Activated T-helper 1 cell treated with anti-CD3 and anti-CD28 coated beads, Interleukin-12 subunit alpha, Interleukin-12 subunit beta, Interleukin-2, Interleukin-4 antibody, amounts not matched to agents 30 ng/mL and 10 ng/mL and 1 ng/mL, durations not matched to agents 14 hours and 24 hours and 36 hours (primary cell): ENCODE measurements at regions of chr2 and their contacts with region 1.

Region 1: GRCh38 chr2:97663965-97664635 is at the start of gene ACTR1B:
- DNase-seq: peak; percentile 98
- H3K4me3 Mint-ChIP-seq: peak within 1 kb of the TSS; percentile 94
- H3K27ac Mint-ChIP-seq: peak within 1 kb of the TSS; percentile 97
- H3K4me1 Mint-ChIP-seq: peaks cover 39% of the 10 kb centered on the region
- H3K27me3 Mint-ChIP-seq: no peaks in the 10 kb centered on the region
- total RNA-seq, gene ACTR1B: 101 and 102 TPM in 2 replicates

Region 2: DNA sequence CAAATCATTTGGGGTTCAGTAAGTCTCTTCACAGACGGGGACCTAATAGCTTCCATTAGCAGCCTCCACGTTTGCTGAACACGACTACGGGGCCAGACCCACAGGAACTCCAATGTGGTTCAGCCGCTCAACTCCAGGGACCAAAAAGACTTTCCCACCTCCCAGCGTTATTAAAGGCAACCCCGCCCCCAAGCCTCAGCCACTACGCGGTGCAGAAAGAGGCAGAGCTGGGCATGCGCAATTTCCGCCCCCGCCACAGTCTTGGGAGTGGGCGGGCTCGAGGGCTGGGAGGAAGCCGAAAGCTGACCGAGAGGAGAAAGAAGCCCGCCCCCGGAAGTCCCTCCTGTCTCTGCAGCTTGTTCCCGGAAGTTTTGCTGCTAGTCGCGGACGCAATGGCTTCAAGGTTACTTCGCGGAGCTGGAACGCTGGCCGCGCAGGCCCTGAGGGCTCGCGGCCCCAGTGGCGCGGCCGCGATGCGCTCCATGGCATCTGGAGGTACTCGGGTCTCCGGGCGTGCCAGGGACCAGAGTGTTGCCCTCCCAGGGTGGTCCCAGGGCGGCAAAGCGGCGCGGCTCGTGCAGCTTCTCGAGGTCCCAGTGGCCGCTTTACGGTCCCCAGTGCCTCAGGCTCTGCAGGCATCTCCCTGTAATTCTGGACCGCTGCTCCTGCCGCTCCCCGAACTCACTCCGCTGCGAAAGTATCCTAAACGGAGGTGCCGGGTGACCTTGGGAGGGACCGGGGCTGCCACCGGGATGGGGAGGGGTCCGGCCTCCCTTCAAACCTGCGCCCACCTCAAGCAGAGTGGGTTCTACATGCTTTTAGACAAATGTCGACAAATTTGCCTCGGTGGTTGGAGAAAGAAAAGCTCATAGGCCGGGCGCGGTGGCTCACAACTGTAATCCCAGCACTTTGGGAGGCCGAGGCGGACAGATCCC is 18.1 kb before region 1 on chr2 and contains the start of gene COX5B:
- intact Hi-C with region 1: loop called (anchors 1 kb)
- DNase-seq: peak; percentile 99
- H3K4me3 Mint-ChIP-seq: peak within 1 kb of the TSS; percentile 86
- H3K27ac Mint-ChIP-seq: peak within 1 kb of the TSS; percentile 97
- H3K4me1 Mint-ChIP-seq: peaks cover 29% of the 10 kb centered on the region
- H3K27me3 Mint-ChIP-seq: peaks cover 3% of the 10 kb centered on the region
- total RNA-seq, gene COX5B: 228 and 241 TPM in 2 replicates

Region 3: GRCh38 chr2:97688062-97688827 is 24.1 kb after region 1 on chr2:
- intact Hi-C with region 1: loop called (anchors 1 kb)
- DNase-seq: no peak
- H3K4me3 Mint-ChIP-seq: no peak overlapping the region
- H3K27ac Mint-ChIP-seq: peak overlapping the region; percentile 57
- H3K4me1 Mint-ChIP-seq: peaks cover 13% of the 10 kb centered on the region
- H3K27me3 Mint-ChIP-seq: no peaks in the 10 kb centered on the region

Region 4: DNA sequence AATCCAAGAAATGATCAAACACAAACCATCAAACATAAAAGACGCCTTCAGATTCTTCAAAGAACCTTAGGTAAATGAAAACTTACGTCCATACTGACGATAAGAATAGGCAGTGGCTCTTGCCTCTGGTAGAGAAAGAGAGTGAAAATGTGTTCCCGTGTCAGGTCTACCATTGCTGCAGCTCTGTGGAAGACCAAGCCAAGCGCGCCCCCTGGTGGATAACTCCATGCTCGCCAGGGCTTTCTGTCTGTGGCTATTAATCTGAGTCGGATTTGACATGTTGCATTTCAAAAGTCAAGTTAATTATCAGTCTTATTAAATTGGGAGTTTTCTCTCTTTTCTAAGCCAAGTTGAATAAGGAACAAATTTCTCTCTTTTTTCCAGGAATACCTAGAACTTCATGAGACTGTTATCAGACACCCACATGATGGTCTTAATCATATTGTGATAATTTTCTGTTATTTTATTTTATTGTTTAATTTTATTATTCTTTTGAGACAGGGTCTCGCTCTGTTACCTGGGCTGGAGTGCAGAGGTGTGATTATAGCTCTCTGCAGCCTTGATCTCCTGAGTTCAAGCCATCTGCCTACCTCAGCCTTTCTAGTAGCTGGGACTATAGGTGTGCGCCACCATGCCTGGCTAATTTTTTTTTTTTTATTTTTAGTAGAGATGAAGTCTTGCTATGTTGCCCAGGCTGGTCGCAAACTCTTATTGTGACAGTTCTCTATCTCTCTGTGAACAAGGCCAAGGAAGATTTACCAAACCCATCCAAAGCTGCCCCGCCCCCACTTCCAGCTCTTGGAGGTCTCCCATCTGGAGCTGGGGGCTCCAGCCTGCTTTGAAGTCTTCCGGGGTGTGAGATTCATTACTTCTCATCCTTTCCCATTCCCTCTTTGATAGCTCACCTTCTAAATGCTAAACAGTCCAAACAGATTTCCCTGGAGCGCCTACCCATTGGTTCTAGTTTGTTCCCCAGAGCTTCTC is 33.4 kb after region 1 on chr2:
- intact Hi-C with region 1: loop called (anchors 1 kb)
- DNase-seq: peak; percentile 82
- H3K4me3 Mint-ChIP-seq: no peak overlapping the region
- H3K27ac Mint-ChIP-seq: no peak overlapping the region
- H3K4me1 Mint-ChIP-seq: peaks cover 19% of the 10 kb centered on the region
- H3K27me3 Mint-ChIP-seq: peaks cover 8% of the 10 kb centered on the region

Region 5: DNA sequence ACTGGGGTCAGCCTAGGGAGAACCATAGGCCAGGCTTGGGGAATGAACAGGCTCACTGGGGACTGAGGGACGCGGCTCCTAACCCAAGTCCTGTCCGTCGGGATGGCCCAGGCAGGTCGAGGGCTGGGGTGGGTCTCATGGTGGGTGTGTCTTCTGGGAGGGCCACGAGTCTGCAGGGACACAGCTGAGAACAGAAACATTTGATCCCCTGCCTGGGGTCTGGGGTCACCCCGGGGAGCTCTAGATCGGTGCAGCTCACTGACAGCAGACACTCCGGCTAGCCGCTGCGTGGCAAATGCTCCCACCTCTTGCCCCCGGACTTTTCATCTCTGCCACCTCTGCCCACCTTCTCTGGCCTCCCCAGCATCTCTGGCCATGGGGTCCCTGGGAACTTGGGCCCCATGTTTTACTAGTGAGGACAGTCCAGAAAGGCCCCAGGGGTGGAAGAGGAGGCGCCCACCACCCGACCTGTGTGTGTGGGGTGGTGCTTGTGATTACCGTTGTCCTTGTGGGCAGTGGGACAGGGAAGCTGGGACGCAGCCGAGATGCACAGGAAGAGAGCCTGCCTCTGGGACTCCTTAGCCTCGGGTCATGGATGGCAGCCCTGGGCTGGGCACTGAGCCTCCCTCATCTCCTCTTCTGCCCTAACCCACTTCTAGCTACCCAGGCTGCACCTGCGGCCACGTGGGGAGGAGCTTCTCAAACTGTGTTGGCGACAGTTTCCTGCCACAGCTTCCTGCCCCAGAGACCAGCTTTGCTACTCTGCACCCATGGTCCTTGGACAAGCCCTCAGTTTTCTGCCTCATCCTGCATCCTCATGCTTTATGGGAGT is 54.2 kb after region 1 on chr2:
- intact Hi-C with region 1: loop called (anchors 1 kb)
- DNase-seq: peak; percentile 71
- H3K4me3 Mint-ChIP-seq: peak overlapping the region; percentile 94
- H3K27ac Mint-ChIP-seq: peak overlapping the region; percentile 93
- H3K4me1 Mint-ChIP-seq: peaks cover 69% of the 10 kb centered on the region
- H3K27me3 Mint-ChIP-seq: no peaks in the 10 kb centered on the region

Region 6: GRCh38 chr2:97740590-97741182 is 76.6 kb after region 1 on chr2:
- intact Hi-C with region 1: loop called (anchors 1 kb)
- DNase-seq: no peak
- H3K4me3 Mint-ChIP-seq: no peak overlapping the region
- H3K27ac Mint-ChIP-seq: peak overlapping the region; percentile 18
- H3K4me1 Mint-ChIP-seq: peaks cover 56% of the 10 kb centered on the region
- H3K27me3 Mint-ChIP-seq: no peaks in the 10 kb centered on the region

Region 7: DNA sequence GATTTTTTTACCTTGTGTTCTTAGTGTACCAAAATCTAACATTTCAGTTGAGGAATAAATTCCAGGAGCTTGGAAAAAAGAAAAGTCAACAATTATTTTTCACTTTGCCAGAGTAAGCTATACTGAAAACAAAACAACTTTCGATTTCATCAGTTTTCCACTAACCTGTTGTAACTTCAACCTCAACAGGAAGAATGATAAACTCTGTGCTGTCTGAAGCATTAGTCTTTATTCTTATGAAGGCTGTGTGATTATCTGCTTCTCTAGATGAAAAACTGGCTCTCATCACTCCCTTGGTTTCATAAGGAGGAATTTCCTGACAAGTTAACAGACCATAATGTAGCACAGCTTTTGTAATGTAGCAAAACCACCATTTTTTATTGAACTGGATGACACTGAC is 170.5 kb after region 1 on chr2:
- intact Hi-C with region 1: no loop called
- DNase-seq: no peak
- H3K4me3 Mint-ChIP-seq: no peak overlapping the region
- H3K27ac Mint-ChIP-seq: no peak overlapping the region
- H3K4me1 Mint-ChIP-seq: peaks cover 17% of the 10 kb centered on the region
- H3K27me3 Mint-ChIP-seq: no peaks in the 10 kb centered on the region

Region 8: DNA sequence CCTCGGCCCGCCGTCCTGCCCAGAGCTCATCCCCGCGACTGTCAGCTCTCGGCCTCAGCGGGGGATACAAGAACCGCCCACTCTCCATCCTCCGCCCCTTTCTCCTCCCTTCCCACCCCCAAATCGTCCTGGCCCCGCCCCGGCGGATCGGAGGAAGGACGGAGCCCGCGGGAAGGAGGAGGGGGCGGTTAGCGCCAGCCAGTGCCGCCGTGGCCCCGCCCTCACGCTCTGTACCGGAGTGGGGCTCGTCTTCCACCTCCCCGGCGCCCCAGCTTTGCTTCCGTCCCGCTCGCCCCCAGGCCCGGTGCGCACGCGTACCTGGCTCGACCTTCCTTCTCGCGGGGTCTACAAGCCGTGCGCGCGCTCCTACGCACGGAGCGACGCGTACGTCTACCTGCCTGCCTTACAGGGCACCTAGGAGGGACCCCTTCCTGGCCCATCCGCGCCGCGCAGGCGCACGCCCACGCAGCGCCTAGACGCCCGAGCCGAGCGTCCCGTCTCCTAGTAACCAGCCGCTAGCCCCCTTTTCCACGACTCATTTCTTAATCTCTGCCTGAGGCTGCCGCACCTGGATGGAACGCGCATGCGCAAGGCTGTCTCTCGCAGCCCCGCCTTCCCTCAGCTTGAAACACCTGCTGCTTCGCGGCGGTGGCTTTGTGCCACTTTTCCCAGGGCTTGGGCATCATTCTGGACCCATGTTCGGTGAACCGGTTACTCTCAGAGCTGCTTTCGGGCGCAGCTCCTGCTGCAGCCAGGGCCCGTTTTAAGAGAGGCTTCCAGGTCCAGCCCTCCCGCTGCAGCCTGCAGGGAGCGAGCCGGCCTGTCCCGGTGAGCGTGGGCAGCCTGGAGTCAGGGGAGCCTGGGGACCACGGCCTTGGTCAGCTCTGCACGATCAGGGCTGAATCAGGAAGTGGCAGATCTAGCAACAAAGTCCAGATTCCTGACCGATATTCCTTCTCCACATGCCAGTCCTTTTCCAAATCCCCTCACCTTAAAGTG is 1477.3 kb after region 1 on chr2 and contains the start of gene C2orf15:
- intact Hi-C with region 1: loop called (anchors 5 kb)
- DNase-seq: peak; percentile 93
- H3K4me3 Mint-ChIP-seq: peak within 1 kb of the TSS; percentile 96
- H3K27ac Mint-ChIP-seq: peak within 1 kb of the TSS; percentile 82
- H3K4me1 Mint-ChIP-seq: peaks cover 10% of the 10 kb centered on the region
- H3K27me3 Mint-ChIP-seq: peaks cover 14% of the 10 kb centered on the region
- total RNA-seq, gene C2orf15: 0.29 TPM in 1 of 2 replicates, not detected in the other